Colonic mucosa (tissue), 4 donors: ENCODE measurements at regions of chr9 and their contacts with region 1.

Region 1: GRCh38 chr9:22452415-22453010 is 5.9 kb downstream of the DMRTA1 start:
- DNase-seq: peak; percentile 48
- H3K4me3 ChIP-seq: no peak overlapping the region
- H3K27ac ChIP-seq: no peak overlapping the region
- H3K4me1 ChIP-seq: no peaks in the 10 kb centered on the region
- H3K27me3 ChIP-seq: no peaks in the 10 kb centered on the region
- CTCF ChIP-seq: peak; percentile 83

Region 2: DNA sequence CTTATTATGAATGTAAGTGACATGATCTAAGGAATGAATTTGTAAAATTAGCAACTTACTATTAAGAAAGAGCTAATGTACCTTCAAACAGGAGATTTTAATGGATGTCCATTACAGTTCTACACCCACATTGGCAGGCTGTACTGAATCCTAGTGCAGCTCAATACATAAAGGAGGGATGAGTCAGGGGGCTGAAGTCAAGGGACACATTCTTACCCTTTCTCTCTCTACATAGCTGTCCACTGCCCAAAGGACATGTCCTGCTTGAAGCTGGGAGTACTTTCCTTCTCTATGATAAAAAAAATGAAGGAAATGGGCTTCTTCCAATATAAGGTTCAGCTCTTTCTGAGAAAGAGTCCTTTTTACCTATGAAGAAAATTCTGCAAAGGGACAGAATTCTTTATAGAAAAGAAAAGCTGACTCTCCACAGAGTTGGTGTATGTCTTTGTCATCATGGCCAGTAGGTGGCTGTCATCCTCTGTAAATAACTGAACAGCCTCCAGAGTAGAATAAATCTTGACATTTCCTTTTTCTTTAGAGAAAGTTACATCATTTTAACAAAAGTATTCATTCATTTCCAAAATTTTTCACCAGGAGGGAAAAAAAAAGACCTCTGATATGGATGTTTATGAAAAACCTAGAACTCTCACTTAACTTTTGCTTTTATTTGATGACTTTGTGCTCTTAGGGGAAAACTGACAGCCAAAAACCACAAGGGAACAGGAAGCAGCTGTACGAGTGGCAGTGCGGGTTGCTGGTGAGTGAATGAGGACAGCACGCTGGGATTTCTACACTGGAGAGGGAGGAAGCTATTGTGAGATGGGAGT is 1199.6 kb before region 1 on chr9:
- intact Hi-C with region 1: no loop called
- DNase-seq: no peak
- H3K4me3 ChIP-seq: no peak overlapping the region
- H3K27ac ChIP-seq: no peak overlapping the region
- H3K4me1 ChIP-seq: no peaks in the 10 kb centered on the region
- H3K27me3 ChIP-seq: no peaks in the 10 kb centered on the region
- CTCF ChIP-seq: no peak

Region 3: DNA sequence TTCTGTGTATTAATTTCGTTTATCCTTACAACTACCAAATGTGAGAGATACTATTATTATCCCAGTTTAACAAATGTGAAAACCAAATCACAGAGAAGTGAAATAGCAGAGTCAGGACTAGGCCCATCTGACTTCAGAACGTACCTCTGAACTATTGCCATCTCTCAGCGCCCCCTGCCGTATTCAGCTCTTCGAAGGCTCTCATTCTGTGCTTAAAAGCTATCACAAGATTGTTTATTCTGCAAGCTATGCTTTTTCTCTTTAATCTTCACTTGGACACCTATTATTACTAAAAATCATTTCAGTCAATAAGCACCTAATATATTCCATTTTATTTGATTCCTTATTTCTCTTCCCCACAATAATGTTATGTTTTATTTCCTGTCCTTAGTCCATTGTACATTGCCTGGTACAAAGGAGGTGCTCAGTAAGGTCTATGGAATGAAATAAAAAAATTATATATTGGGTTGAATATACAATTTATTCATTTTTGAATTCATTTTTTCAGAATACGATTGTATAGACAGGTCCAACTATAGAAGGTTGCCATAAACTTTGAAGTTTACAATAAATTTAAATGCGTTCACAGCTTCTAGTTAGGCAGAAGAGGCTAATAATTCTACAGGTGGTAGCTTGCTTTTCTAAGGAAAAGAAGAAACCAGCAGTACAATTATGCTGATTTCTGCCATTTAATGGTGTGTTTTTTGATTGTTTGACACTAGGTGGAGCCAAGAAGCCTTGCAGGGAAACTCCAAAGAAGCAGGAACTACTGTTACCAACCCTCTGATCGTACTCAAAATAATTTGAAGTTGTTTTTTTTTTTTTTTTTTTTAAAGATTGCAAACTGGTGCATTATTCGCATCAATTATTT is 208.1 kb before region 1 on chr9:
- intact Hi-C with region 1: loop called (anchors 5 kb)
- DNase-seq: peak; percentile 45
- H3K4me3 ChIP-seq: no peak overlapping the region
- H3K27ac ChIP-seq: no peak overlapping the region
- H3K4me1 ChIP-seq: no peaks in the 10 kb centered on the region
- H3K27me3 ChIP-seq: no peaks in the 10 kb centered on the region
- CTCF ChIP-seq: peak; percentile 24

Region 4: GRCh38 chr9:22307013-22307711 is 145.4 kb before region 1 on chr9:
- intact Hi-C with region 1: loop called (anchors 5 kb)
- DNase-seq: peak; percentile 19
- H3K4me3 ChIP-seq: no peak overlapping the region
- H3K27ac ChIP-seq: no peak overlapping the region
- H3K4me1 ChIP-seq: no peaks in the 10 kb centered on the region
- H3K27me3 ChIP-seq: no peaks in the 10 kb centered on the region
- CTCF ChIP-seq: peak; percentile 30